ENCODE measurements at regions of chrX and their contacts with region 1.

Region 1: DNA sequence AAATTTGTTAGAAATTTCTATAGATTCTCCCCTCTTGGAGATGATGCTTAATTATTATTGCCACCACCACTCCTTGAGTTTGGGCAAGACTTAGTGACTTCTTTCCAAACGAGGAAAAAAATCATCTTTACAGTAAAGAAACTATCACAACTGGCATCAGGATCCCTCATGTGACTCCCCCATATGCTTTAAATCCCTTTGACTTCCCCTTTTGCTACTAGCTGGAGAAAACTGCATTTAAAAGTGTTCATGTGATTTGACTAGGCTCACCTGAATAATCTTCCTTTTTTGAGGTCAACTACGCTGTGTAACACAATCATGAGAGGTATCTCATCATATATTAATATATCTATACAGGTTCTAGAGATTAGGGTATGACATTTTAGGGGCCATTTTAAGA is 30.3 kb upstream of the ENOX2 start:
- DNase-seq: no peak
- ATAC-seq: no peak
- H3K4me3 ChIP-seq: no peak overlapping the region
- H3K27ac ChIP-seq: no peak overlapping the region
- H3K4me1 ChIP-seq: no peaks in the 10 kb centered on the region
- H3K27me3 ChIP-seq: no peaks in the 10 kb centered on the region
- CTCF ChIP-seq: no peak

Region 2: GRCh38 chrX:131068945-131069719 is 135.8 kb after region 1 on chrX:
- CTCF ChIA-PET with region 1: interaction called, 10 read pairs
- POLR2A ChIA-PET with region 1: no interaction called
- in situ Hi-C with region 1: no loop called
- intact Hi-C with region 1: no loop called
- DNase-seq: no peak
- ATAC-seq: peak; percentile 57; the same call in 1 of the 2 replicates
- H3K4me3 ChIP-seq: no peak overlapping the region
- H3K27ac ChIP-seq: no peak overlapping the region
- H3K4me1 ChIP-seq: no peaks in the 10 kb centered on the region
- H3K27me3 ChIP-seq: no peaks in the 10 kb centered on the region; the same call in 1 of the 2 replicates
- CTCF ChIP-seq: peak; percentile 55

Measured in Panc1 (cell line).